ENCODE measurements at regions of chr4 and their contacts with region 1.

Region 1: GRCh38 chr4:82900331-82901128 is at the start of gene THAP9:
- DNase-seq: peak; percentile 92
- H3K4me3 Mint-ChIP-seq: no peak within 1 kb of the TSS
- H3K27ac Mint-ChIP-seq: no peak within 1 kb of the TSS
- H3K4me1 Mint-ChIP-seq: peaks cover 5% of the 10 kb centered on the region
- H3K27me3 Mint-ChIP-seq: no peaks in the 10 kb centered on the region
- CTCF ChIP-seq: no peak
- total RNA-seq, gene THAP9: 4.7 and 7.2 TPM in 2 replicates

Region 2: DNA sequence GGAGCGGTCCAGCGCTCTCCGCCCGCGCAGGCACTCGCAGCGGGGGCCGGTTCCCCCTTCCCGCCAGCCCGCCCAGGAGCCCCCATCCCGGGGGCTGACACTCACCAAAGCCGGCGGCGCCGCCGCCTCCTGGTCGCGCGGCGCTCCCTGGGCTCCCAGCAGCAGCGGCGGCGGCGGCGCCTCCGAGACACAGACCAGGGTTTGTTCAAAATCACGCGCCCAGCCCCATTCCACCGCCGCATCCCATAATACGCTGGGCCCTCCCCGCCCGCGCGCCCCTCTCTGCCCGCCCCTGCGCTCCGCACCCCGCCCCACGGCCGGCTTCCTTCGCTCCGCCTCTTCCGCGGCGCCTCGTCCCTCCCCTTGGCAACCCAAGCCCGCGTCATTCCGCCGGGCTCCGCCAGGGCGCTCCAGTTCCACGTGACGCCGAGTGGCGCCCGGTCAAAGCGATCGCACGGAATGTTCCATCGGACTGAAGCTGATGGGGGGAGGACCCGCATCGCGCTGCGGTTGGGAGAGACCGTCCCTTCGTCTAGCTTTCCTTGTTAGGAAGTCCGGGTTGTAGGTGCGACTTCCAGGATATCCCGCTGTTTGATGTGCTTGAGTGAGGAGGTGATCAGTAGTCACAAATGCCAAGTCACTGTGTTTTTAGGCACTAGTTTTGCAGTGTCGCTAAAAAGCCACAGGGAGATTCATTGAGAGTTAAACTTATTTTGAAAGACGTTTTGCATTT is 112.3 kb after region 1 on chr4:
- CTCF ChIA-PET with region 1: interaction called, 3 read pairs
- intact Hi-C with region 1: loop called (anchors 5 kb)
- DNase-seq: peak; percentile 95
- H3K4me3 Mint-ChIP-seq: peak overlapping the region; percentile 93
- H3K27ac Mint-ChIP-seq: peak overlapping the region; percentile 86
- H3K4me1 Mint-ChIP-seq: peaks cover 13% of the 10 kb centered on the region
- H3K27me3 Mint-ChIP-seq: no peaks in the 10 kb centered on the region
- CTCF ChIP-seq: no peak

Region 3: GRCh38 chr4:83034630-83035494 is 134.3 kb after region 1 on chr4 and contains the start of gene COPS4:
- CTCF ChIA-PET with region 1: no interaction called
- intact Hi-C with region 1: no loop called
- DNase-seq: peak; percentile 92
- H3K4me3 Mint-ChIP-seq: peak within 1 kb of the TSS; percentile 93
- H3K27ac Mint-ChIP-seq: peak within 1 kb of the TSS; percentile 91
- H3K4me1 Mint-ChIP-seq: no peaks in the 10 kb centered on the region
- H3K27me3 Mint-ChIP-seq: no peaks in the 10 kb centered on the region
- CTCF ChIP-seq: no peak
- total RNA-seq, gene COPS4: 21.0 and 21.7 TPM in 2 replicates

Measured in Calu3 (cell line).